ENCODE measurements at regions of chr12 and their contacts with region 1.

Region 1: GRCh38 chr12:52390739-52391617 is 5.5 kb upstream of the KRT84 start:
- DNase-seq: no peak
- H3K4me3 ChIP-seq: no peak overlapping the region
- H3K27me3 ChIP-seq: peaks cover 9% of the 10 kb centered on the region; the same call in 1 of the 2 replicates
- CTCF ChIP-seq: peak; percentile 76

Region 2: DNA sequence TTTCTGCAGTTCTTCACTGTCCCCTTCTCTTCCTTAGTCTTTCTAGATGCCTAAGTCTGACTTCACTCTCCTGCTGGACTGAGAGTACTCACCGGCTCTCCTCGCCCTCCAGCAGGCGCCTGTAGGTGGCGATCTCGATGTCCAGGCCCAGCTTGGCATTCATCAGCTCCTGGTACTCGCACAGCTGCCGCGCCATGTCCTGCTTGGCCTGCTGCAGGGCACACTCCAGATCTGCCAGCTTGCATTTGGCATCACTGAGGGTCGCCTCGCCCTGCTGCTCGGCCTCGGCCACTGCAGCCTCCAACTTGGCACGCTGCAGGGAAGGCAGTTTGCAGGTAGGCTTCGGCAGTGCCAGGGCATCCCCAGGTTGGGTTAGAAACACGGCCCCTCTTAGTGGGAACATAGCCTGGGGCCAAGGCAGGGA is 10.7 kb before region 1 on chr12:
- CTCF ChIA-PET with region 1: interaction called, 12 read pairs
- POLR2A ChIA-PET with region 1: no interaction called
- DNase-seq: no peak
- H3K4me3 ChIP-seq: no peak overlapping the region
- H3K27me3 ChIP-seq: peaks cover 9% of the 10 kb centered on the region
- CTCF ChIP-seq: peak; percentile 64

Region 3: DNA sequence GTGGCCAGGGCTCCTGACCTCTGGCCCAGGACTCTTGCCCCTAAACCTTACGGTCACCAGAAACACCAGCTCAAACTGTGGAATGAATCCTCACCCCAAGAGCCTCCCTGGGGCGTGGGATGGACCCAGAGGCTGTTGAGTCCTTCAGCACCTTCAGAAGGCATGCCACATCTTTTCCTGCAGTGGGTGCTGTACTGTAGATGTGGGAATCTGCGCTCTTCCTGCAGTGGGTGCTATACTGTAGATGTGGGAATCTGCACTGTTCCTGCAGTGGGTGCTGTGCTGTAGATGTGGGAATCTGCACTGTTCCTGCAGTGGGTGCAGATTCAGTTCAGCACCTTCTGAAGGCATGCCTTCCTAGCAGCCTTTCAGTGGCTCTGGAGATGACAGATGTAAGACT is 14.0 kb after region 1 on chr12:
- CTCF ChIA-PET with region 1: interaction called, 10 read pairs
- POLR2A ChIA-PET with region 1: no interaction called
- DNase-seq: no peak
- H3K4me3 ChIP-seq: no peak overlapping the region
- H3K27me3 ChIP-seq: peaks cover 8% of the 10 kb centered on the region
- CTCF ChIP-seq: no peak

Region 4: GRCh38 chr12:52506858-52507715 is 116.1 kb after region 1 on chr12:
- CTCF ChIA-PET with region 1: interaction called, 21 read pairs
- POLR2A ChIA-PET with region 1: no interaction called
- DNase-seq: no peak
- H3K4me3 ChIP-seq: no peak overlapping the region
- H3K27me3 ChIP-seq: peaks cover 8% of the 10 kb centered on the region
- CTCF ChIP-seq: peak; percentile 71